ENCODE measurements at regions of chr21 and their contacts with region 1.

Region 1: GRCh38 chr21:34986561-34987500 is 62.3 kb downstream of the RUNX1 start:
- DNase-seq: peak; percentile 90
- H3K4me3 Mint-ChIP-seq: peak overlapping the region; percentile 86
- H3K27ac Mint-ChIP-seq: peak overlapping the region; percentile 97
- H3K4me1 Mint-ChIP-seq: peaks cover 85% of the 10 kb centered on the region
- H3K27me3 Mint-ChIP-seq: no peaks in the 10 kb centered on the region

Region 2: DNA sequence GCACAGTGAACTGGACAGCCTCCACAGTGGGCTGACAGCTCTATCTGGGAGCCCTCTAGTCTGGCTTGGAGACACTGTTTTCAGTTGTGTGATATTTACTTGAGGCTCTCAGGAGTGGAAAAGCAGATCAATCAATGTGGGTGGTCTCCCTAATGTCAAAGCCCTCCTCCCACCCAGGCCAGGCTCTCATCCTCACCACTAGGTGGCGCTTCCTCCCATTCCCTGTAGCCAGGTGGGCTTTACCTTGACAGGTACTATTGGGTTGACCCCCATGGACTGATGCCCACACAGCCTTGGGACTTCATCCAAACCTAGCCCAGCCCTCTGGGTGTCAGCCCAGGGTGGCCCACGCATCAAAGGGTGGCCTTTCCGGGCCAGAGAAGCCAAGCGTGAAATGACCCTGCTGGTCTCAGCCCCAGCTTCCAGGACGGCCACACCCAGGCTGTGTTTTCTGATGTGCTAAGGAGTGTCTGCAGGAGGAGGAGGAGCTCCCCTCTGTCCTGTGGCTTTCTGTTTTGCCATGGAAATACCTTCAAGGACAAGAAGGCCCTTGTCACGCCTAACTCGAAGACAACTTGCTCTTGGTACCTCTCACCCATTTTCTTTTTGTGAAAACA is 264.0 kb before region 1 on chr21:
- intact Hi-C with region 1: no loop called
- DNase-seq: peak; percentile 72
- H3K4me3 Mint-ChIP-seq: no peak overlapping the region
- H3K27ac Mint-ChIP-seq: no peak overlapping the region
- H3K4me1 Mint-ChIP-seq: peaks cover 7% of the 10 kb centered on the region
- H3K27me3 Mint-ChIP-seq: peaks cover 10% of the 10 kb centered on the region

Region 3: DNA sequence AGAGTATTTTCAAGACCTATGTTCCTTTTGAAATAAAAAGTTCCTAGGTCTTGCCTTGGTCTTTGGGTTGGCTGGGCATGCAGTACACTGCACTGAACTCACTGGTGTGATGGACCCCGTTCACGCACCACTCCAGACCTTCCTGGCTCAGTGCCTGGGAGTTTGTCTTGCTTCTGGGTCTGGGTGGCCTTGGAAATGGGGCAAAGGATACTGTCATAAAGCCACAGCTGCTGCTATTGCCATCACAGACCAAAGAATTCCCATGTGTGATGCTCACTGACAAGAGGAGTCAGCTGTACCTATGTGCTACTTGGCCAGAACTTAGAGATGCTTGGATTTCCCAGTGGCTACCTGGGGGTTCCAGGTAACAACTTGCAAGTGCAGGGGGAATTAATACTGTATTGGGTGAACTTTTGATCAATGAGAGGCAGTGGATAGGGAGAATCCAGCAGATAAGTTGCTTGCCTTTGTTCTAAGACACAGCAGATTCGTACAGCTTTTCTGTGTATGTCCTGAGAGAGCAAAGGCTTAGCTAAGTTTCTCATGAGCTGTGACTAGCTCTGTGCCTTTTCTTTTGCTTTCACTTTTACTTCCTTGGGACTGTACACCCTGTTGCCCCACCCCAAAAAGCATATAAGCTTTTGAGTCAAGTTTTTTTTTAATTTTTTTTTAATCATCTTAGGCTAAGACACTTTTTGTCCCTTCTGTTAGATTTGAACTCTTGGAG is 53.1 kb before region 1 on chr21:
- intact Hi-C with region 1: loop called (anchors 2 kb)
- DNase-seq: peak; percentile 83
- H3K4me3 Mint-ChIP-seq: peak overlapping the region; percentile 78
- H3K27ac Mint-ChIP-seq: peak overlapping the region; percentile 85
- H3K4me1 Mint-ChIP-seq: peaks cover 72% of the 10 kb centered on the region
- H3K27me3 Mint-ChIP-seq: no peaks in the 10 kb centered on the region

Region 4: GRCh38 chr21:34974162-34974981 is 12.5 kb before region 1 on chr21:
- intact Hi-C with region 1: loop called (anchors 1 kb)
- DNase-seq: peak; percentile 90
- H3K4me3 Mint-ChIP-seq: peak overlapping the region; percentile 83
- H3K27ac Mint-ChIP-seq: peak overlapping the region; percentile 86
- H3K4me1 Mint-ChIP-seq: peaks cover 68% of the 10 kb centered on the region
- H3K27me3 Mint-ChIP-seq: peaks cover 26% of the 10 kb centered on the region

Region 5: DNA sequence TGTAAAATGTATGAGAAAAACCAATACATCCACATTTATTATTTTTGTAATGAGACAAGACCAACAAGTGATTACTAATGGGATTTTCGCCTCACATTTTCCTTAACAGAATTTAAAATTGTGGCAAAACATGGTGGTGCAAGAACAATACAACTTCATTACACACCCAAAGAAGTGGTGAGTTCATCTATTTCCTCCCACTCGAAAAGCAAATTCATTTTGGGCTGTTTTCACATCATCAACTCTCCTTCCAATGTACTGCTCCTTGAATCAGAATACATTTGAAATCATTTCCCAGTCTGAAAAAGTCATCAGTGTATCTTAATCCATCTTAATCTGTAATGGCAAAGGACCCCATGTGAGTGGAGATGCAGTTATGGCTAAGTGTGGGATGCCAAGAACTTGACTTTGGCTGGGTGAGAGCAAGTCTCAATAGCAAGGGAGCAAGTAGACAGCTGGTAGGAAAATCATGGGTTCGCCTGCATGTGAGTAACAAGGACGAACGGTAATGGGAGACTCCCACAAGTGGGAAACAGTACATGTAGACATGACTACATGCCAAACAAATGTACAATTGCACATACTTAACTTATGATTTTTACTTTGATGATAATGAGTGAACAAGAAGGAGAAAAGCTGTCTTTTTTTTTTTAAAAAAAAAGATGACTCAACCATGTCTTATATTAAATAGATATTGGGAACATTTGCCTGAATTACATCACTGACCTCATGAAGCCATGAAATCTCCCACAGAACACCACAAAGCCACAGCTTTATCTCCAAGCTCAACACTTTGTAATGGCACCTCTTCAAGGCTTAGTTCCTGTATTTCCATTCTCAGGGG is 16.3 kb after region 1 on chr21:
- intact Hi-C with region 1: no loop called
- DNase-seq: no peak
- H3K4me3 Mint-ChIP-seq: no peak overlapping the region
- H3K27ac Mint-ChIP-seq: peak overlapping the region; percentile 67
- H3K4me1 Mint-ChIP-seq: peaks cover 59% of the 10 kb centered on the region
- H3K27me3 Mint-ChIP-seq: no peaks in the 10 kb centered on the region

Region 6: DNA sequence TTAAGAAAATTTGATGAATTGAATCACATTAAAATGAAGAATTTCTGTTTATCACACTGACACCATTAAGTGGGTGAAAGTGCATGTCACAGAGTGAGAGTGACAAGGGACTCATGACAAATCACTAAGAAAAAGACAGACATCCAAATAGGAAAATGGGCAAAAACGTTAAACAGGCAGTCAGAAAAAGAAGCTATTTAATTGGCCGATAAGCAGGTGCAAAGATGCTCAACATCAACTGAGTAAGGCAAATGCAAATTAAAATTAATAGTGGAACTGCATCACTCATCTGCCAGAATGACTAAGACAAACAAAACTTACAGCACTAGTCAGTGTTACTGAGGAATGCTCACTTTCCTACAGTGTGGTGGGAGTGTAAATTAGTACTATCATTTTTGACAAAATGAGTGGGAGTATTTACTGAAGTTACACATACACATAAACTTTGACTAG is 101.5 kb after region 1 on chr21:
- intact Hi-C with region 1: loop called (anchors 1 kb)
- DNase-seq: no peak
- H3K4me3 Mint-ChIP-seq: no peak overlapping the region
- H3K27ac Mint-ChIP-seq: peak overlapping the region; percentile 96
- H3K4me1 Mint-ChIP-seq: peaks cover 30% of the 10 kb centered on the region
- H3K27me3 Mint-ChIP-seq: no peaks in the 10 kb centered on the region

Region 7: GRCh38 chr21:35226948-35227744 is 240.3 kb after region 1 on chr21:
- intact Hi-C with region 1: loop called (anchors 10 kb)
- DNase-seq: peak; percentile 85
- H3K4me3 Mint-ChIP-seq: peak overlapping the region; percentile 46
- H3K27ac Mint-ChIP-seq: peak overlapping the region; percentile 70
- H3K4me1 Mint-ChIP-seq: peaks cover 30% of the 10 kb centered on the region
- H3K27me3 Mint-ChIP-seq: no peaks in the 10 kb centered on the region

Measured in activated CD4-positive, alpha-beta T cell treated with anti-CD3 and anti-CD28 coated beads, Interleukin-2, amount 10 ng/mL, durations not matched to agents 24 days and 14 days (primary cell).